ENCODE measurements at regions of chr4 and their contacts with region 1.

Region 1: GRCh38 chr4:77025643-77026321 is 50.0 kb downstream of the CCNI start:
- DNase-seq: peak; percentile 41
- ATAC-seq: peak; percentile 85
- H3K4me3 Mint-ChIP-seq: no peak overlapping the region
- H3K27ac Mint-ChIP-seq: peak overlapping the region; percentile 70
- H3K4me1 Mint-ChIP-seq: peaks cover 41% of the 10 kb centered on the region
- H3K27me3 Mint-ChIP-seq: no peaks in the 10 kb centered on the region
- CTCF ChIP-seq: no peak

Region 2: GRCh38 chr4:76957004-76957738 is 68.6 kb before region 1 on chr4:
- CTCF ChIA-PET with region 1: no interaction called
- POLR2A ChIA-PET with region 1: no interaction called
- intact Hi-C with region 1: loop called (anchors 5 kb)
- DNase-seq: no peak
- ATAC-seq: no peak
- H3K4me3 Mint-ChIP-seq: no peak overlapping the region
- H3K27ac Mint-ChIP-seq: no peak overlapping the region
- H3K4me1 Mint-ChIP-seq: peaks cover 21% of the 10 kb centered on the region
- H3K27me3 Mint-ChIP-seq: no peaks in the 10 kb centered on the region
- CTCF ChIP-seq: no peak

Region 3: DNA sequence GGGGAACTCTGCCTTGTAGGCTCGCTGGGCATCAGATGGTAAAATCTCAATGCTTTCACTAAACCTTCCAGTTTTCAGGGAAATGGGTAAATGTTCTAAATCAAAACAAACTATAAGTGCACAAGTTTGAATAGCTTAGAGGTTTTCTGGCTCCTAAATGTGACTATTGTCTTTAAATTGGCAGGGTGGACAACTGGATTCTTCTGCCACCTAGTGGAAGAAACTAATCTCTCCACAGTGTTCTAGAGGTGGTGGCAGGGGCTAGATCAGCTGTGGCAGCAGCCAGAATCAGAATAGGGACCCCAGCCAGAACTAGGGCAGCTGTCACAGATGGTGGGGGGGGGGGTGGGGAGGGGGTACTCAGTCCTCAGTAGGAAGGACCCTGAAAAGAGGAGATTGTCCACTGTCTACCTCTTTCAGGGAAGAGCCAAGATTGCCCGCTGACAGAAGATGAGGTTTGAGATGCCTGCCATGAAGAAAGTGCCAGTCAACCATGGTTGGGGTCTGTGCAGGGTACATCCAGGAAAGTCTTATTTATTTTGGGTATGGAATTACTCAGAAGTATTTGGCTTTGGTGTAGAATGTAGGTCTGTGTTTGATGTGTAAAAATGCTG is 332.6 kb after region 1 on chr4:
- CTCF ChIA-PET with region 1: no interaction called
- POLR2A ChIA-PET with region 1: no interaction called
- intact Hi-C with region 1: no loop called
- DNase-seq: peak; percentile 13
- ATAC-seq: peak; percentile 62
- H3K4me3 Mint-ChIP-seq: no peak overlapping the region
- H3K27ac Mint-ChIP-seq: no peak overlapping the region
- H3K4me1 Mint-ChIP-seq: no peaks in the 10 kb centered on the region
- H3K27me3 Mint-ChIP-seq: peaks cover 4% of the 10 kb centered on the region
- CTCF ChIP-seq: peak; percentile 72